ENCODE measurements at regions of chr17 and their contacts with region 1.

Region 1: DNA sequence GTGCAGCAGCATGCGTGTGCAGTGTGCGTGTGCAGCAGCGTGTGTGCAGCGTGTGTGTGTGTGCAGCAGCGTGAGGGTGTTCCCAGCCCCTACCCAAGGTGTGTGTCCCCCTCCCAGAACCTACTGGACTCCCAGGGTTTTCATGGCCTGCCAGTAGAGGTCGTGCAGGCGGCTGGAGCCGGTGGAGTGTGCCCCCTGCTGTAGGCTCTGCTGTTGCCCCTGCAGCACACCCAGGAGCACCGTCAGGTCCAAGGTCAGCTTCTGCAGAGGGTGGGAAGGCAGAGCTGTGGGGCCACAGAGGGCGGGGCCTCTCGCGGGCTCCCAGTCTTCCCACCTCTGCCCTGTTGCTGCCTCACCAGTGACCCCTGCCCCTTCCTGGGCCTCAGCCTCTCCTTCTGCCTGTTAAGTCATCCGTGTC is 15.0 kb downstream of the MYBBP1A start:
- DNase-seq: peak; percentile 49 to 57 (median 57)
- H3K4me3 ChIP-seq: no peak overlapping the region
- H3K27ac ChIP-seq: peak overlapping the region in 1 of 2 experiments; percentile 5
- H3K4me1 ChIP-seq: peaks cover 0 to 48% (median 23%) of the 10 kb centered on the region in 4 experiments
- H3K27me3 ChIP-seq: no peaks in the 10 kb centered on the region

Region 2: DNA sequence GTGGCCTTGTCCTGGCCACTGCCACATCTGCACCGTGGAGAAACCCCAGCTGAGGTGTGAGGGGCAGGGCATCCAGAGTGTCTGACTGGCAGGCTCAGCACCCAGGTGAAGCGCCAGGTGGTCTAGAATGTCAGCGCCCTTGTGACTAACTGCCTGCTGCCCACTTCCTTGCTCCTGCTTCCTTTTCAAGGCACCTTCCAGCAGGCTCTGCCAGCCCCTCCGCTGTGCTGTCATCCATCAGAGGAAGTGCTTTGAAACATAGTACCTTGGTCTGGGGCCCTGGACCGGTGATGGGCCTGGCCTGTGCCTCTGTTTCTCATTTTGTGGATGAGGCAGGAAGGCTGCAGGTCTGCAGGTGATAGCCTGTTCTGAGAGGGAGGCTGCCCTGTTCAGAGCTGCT is 36.1 kb before region 1 on chr17:
- CTCF ChIA-PET with region 1: interaction called, 10 read pairs
- POLR2A ChIA-PET with region 1: interaction called, 4 read pairs
- DNase-seq: peak in 1 of 3 donors; percentile 55
- H3K4me3 ChIP-seq: peak overlapping the region in 2 of 7 experiments; percentile 10 to 47
- H3K27ac ChIP-seq: peak overlapping the region in 1 of 2 experiments; percentile 75
- H3K4me1 ChIP-seq: peaks cover 11 to 100% (median 96%) of the 10 kb centered on the region in 4 experiments
- H3K27me3 ChIP-seq: no peaks in the 10 kb centered on the region

Region 3: GRCh38 chr17:4554997-4555799 is 15.0 kb after region 1 on chr17 and contains the start of gene MYBBP1A:
- CTCF ChIA-PET with region 1: interaction called, 18 read pairs
- POLR2A ChIA-PET with region 1: no interaction called
- DNase-seq: peak; percentile 94 to 96 (median 94)
- H3K4me3 ChIP-seq: peak within 1 kb of the TSS; percentile 79 to 97 (median 85)
- H3K27ac ChIP-seq: peak within 1 kb of the TSS; percentile 50 to 88
- H3K4me1 ChIP-seq: peaks cover 0 to 26% (median 24%) of the 10 kb centered on the region in 4 experiments
- H3K27me3 ChIP-seq: no peaks in the 10 kb centered on the region

Measured in common myeloid progenitor, CD34-positive (primary cell).